ENCODE measurements at regions of chr5 and their contacts with region 1.

Region 1: GRCh38 chr5:137735555-137736284 is at the start of gene KLHL3:
- DNase-seq: no peak
- total RNA-seq, gene KLHL3: 11.4 to 11.5 TPM

Region 2: GRCh38 chr5:137310051-137310730 is 425.5 kb before region 1 on chr5:
- intact Hi-C with region 1: loop called in 1 of 2 experiments (anchors 10 kb)
- DNase-seq: no peak

Measured in posterior vena cava (tissue), 2 donors.